GM12878 (cell line): ENCODE measurements at regions of chr1 and their contacts with region 1.

Region 1: DNA sequence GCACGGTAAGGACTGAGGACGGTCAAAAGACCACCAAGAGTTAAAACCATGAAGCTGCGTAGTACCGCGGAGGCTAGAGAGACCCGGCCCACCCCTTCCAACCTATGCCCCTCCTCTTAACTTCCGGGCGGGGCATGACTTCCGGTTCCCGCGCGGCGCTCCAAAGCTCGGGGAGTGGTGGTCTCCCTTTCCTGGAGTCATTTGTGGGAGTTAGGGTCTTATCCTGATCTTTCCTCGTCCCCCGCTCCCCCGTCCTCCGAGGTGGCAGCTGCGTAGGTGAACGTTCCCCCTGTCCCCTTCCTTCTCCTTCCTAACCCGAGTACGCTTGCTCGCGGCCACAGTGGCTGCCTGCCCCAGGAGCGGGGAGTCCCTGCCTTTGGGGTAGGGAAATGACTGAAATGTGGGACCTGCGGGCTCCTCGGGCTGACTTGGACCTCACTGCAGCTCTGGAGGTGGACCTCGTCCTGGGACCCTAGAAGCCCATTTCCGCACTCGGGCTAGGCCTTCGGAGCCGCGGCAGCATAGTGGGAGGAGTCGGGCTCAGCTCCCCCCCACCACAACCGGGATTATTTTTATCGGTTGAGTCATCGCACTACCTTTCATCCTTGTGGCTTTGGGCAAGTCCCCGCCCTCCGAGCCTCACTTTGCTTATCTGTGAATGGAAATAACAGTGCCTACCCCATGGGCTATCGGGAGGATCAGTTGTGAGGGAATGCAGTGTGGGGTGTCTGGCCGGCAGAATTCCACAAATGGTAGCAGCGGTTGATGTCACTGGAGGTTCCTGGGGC is 24.1 kb downstream of the CELA3A start:
- DNase-seq: peak; percentile 89
- ATAC-seq: peak; percentile 84
- H3K4me3 ChIP-seq: peak overlapping the region; percentile 88
- H3K27ac ChIP-seq: peak overlapping the region; percentile 97
- H3K4me1 ChIP-seq: peaks cover 7% of the 10 kb centered on the region
- H3K27me3 ChIP-seq: no peaks in the 10 kb centered on the region
- CTCF ChIP-seq: no peak
- EP300 ChIP-seq: no peak; a peak in 1 of 4 replicates
- POLR2A ChIP-seq: peak; percentile 95
- RAD21 ChIP-seq: no peak

Region 2: GRCh38 chr1:21782868-21783678 is 242.5 kb before region 1 on chr1 and contains the start of gene USP48:
- CTCF ChIA-PET with region 1: interaction called, 9 read pairs
- POLR2A ChIA-PET with region 1: interaction called, 19 read pairs
- RAD21 ChIA-PET with region 1: interaction called, 16 read pairs
- SMC1A ChIA-PET with region 1: interaction called, 13 read pairs
- in situ Hi-C with region 1: no loop called
- intact Hi-C with region 1: no loop called
- DNase-seq: peak; percentile 87
- ATAC-seq: peak; percentile 78
- H3K4me3 ChIP-seq: peak within 1 kb of the TSS; percentile 73
- H3K27ac ChIP-seq: peak within 1 kb of the TSS; percentile 100
- H3K4me1 ChIP-seq: 0 out of 2 replicates have a peak, but pooled peaks cover 4% of the 10 kb centered on the region
- H3K27me3 ChIP-seq: no peaks in the 10 kb centered on the region
- CTCF ChIP-seq: no peak
- EP300 ChIP-seq: peak in 1 of 2 experiments; percentile 22; a peak in 1 of 4 replicates
- POLR2A ChIP-seq: peak; percentile 100
- RAD21 ChIP-seq: 0 out of 2 replicates have a peak, but pooled peaks have one; percentile 1
- polyA plus RNA-seq, gene USP48: 21.2 to 39.0 TPM

Region 3: GRCh38 chr1:22052115-22053016 is 26.8 kb after region 1 on chr1 and contains the start of gene CDC42:
- CTCF ChIA-PET with region 1: interaction called, 107 read pairs
- POLR2A ChIA-PET with region 1: interaction called, 325 read pairs
- RAD21 ChIA-PET with region 1: interaction called, 54 read pairs
- SMC1A ChIA-PET with region 1: interaction called, 100 read pairs
- in situ Hi-C with region 1: no loop called
- intact Hi-C with region 1: no loop called
- DNase-seq: peak; percentile 83
- ATAC-seq: peak; percentile 89
- H3K4me3 ChIP-seq: peak within 1 kb of the TSS; percentile 98
- H3K27ac ChIP-seq: peak within 1 kb of the TSS; percentile 90
- H3K4me1 ChIP-seq: peaks cover 15% of the 10 kb centered on the region
- H3K27me3 ChIP-seq: no peaks in the 10 kb centered on the region
- CTCF ChIP-seq: no peak
- EP300 ChIP-seq: no peak; a peak in 1 of 4 replicates
- POLR2A ChIP-seq: peak; percentile 99
- RAD21 ChIP-seq: no peak
- polyA plus RNA-seq, gene CDC42: 286 to 442 TPM

Region 4: DNA sequence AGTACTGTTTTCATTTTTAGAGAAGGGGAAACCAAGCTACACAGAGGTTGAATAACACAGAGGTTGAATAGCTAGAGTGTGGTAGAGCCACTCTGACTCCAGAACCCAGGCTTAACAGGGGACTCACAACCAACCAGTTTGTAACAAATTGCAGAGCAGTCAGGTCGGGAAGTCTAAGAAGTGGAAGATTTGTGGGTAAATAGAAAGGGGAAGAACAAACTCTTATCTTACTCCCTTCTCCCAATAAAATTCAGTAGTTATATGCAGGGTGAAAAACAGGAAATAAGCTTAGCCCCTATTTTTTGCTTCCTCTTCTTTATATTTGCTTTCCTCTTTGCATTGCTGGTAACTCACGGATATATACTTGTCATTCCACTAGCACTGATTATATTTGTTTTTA is 50.2 kb after region 1 on chr1:
- CTCF ChIA-PET with region 1: interaction called, 3 read pairs
- POLR2A ChIA-PET with region 1: no interaction called
- RAD21 ChIA-PET with region 1: interaction called, 4 read pairs
- SMC1A ChIA-PET with region 1: interaction called, 10 read pairs
- in situ Hi-C with region 1: no loop called
- intact Hi-C with region 1: no loop called
- DNase-seq: no peak
- ATAC-seq: peak; percentile 56
- H3K4me3 ChIP-seq: no peak overlapping the region
- H3K27ac ChIP-seq: 0 out of 2 replicates have a peak overlapping the region, but pooled peaks have one; percentile 3
- H3K4me1 ChIP-seq: peaks cover 48% of the 10 kb centered on the region
- H3K27me3 ChIP-seq: no peaks in the 10 kb centered on the region
- CTCF ChIP-seq: no peak
- EP300 ChIP-seq: no peak
- POLR2A ChIP-seq: no peak
- RAD21 ChIP-seq: no peak

Region 5: DNA sequence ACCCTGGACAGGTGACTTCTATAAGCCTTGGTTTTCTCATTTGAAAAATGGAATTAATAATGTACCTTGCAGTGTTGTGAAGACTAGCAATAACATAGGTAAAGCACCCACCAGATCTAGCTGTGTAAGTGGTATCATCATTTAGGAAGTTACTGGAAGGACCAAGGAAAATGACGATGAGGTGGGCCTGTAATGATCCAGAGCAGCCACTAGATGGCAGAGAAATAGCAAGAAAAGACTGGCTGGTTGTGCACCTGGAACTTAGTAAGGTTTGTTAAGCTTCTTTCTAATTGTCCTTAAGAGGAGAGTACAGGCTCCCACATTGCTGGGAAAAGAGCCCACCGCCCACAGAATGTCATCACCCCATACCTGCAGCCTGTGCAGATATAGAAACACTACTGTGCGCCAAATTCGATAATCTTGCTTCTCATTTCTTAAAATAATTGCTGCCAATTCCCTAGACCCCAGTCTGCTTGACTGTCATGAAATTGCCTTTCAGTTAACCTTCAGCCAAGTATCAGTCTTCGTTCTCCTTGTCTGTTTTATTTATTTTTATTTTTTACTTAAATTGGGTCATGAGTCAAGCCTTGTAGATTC is 80.1 kb after region 1 on chr1:
- CTCF ChIA-PET with region 1: interaction called, 6 read pairs
- POLR2A ChIA-PET with region 1: interaction called, 14 read pairs
- RAD21 ChIA-PET with region 1: interaction called, 3 read pairs
- SMC1A ChIA-PET with region 1: interaction called, 9 read pairs
- in situ Hi-C with region 1: no loop called
- intact Hi-C with region 1: no loop called
- DNase-seq: no peak
- ATAC-seq: peak; percentile 82
- H3K4me3 ChIP-seq: no peak overlapping the region
- H3K27ac ChIP-seq: no peak overlapping the region
- H3K4me1 ChIP-seq: peaks cover 22% of the 10 kb centered on the region
- H3K27me3 ChIP-seq: no peaks in the 10 kb centered on the region
- CTCF ChIP-seq: peak; percentile 78 to 87 (median 79)
- EP300 ChIP-seq: no peak
- POLR2A ChIP-seq: no peak
- RAD21 ChIP-seq: peak; percentile 75